ENCODE measurements at regions of chr1 and their contacts with region 1.

Region 1: DNA sequence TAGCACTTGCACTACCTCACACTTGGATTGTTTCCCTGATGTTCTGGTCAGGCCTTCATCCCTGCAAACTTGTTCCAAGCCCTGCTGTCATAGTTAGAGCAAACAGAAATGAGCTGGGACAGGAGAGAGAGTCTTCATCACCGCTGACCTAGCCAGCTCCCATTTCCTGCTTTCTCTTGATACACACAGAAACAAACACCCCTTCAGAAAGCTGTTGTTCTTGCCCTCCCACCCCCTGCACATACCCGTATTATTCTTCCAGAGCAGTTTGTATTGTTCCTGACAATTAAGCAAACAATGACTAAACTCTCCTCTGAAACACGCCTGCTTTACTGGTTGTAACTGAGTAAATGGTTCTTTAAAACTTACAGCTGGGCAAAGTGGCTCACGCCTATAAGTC is 2.9 kb upstream of the SYT2 start:
- DNase-seq: no peak
- H3K4me3 Mint-ChIP-seq: no peak overlapping the region
- H3K27ac Mint-ChIP-seq: no peak overlapping the region
- H3K4me1 Mint-ChIP-seq: no peaks in the 10 kb centered on the region
- H3K27me3 Mint-ChIP-seq: peaks cover 78% of the 10 kb centered on the region

Region 2: GRCh38 chr1:202348509-202349205 is 364.5 kb before region 1 on chr1 and contains the start of gene PPP1R12B:
- CTCF ChIA-PET with region 1: interaction called, 10 read pairs
- DNase-seq: peak; percentile 98
- H3K4me3 Mint-ChIP-seq: peak within 1 kb of the TSS; percentile 83
- H3K27ac Mint-ChIP-seq: peak within 1 kb of the TSS; percentile 90
- H3K4me1 Mint-ChIP-seq: peaks cover 25% of the 10 kb centered on the region
- H3K27me3 Mint-ChIP-seq: peaks cover 6% of the 10 kb centered on the region

Region 3: DNA sequence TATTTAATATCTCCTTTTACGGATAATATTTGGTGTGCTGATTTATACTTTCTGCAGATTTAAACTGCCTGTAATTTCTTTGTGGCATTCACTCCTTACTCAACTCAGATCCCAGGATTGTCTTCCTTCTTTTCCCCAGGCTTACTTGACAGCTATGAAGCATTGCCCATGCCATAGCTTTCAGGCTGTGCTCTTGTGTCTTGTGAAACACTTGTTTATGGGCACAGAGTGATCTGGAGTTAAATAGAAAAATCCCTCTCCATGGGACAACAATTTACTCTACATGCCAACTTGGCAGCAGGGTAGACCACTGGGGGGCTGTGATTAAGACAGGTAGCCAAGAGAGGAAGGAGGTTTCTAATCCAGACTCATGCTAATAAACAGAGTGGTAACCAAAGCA is 307.2 kb before region 1 on chr1:
- CTCF ChIA-PET with region 1: no interaction called
- DNase-seq: no peak
- H3K4me3 Mint-ChIP-seq: no peak overlapping the region
- H3K27ac Mint-ChIP-seq: no peak overlapping the region
- H3K4me1 Mint-ChIP-seq: no peaks in the 10 kb centered on the region
- H3K27me3 Mint-ChIP-seq: no peaks in the 10 kb centered on the region

Region 4: GRCh38 chr1:202462342-202463076 is 250.6 kb before region 1 on chr1:
- CTCF ChIA-PET with region 1: interaction called, 16 read pairs
- DNase-seq: no peak
- H3K4me3 Mint-ChIP-seq: no peak overlapping the region
- H3K27ac Mint-ChIP-seq: no peak overlapping the region
- H3K4me1 Mint-ChIP-seq: no peaks in the 10 kb centered on the region
- H3K27me3 Mint-ChIP-seq: no peaks in the 10 kb centered on the region

Region 5: DNA sequence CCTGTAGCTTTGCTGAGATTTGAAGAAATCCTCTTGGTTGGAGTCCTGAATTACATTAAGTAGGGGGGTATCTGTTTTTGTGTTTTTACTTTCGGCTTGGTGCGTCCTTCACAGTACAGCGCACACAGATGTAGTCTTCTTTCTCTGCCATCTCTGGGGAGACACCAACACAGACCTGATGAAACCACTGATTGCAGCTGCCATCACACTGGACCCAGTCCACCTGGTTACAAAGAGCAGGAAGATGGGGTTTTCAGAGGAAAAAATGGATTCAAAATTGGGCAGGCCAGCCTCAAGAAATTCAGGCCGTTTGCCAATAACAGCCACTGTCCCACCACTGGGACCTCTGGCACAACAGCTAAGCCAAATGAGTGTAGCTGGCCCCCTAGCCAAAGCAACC is 15.8 kb after region 1 on chr1:
- CTCF ChIA-PET with region 1: interaction called, 16 read pairs
- DNase-seq: no peak
- H3K4me3 Mint-ChIP-seq: no peak overlapping the region
- H3K27ac Mint-ChIP-seq: no peak overlapping the region
- H3K4me1 Mint-ChIP-seq: no peaks in the 10 kb centered on the region
- H3K27me3 Mint-ChIP-seq: no peaks in the 10 kb centered on the region